ENCODE measurements at regions of chr3 and their contacts with region 1.

Region 1: GRCh38 chr3:155895379-155895900 is 25.0 kb downstream of the GMPS start:
- DNase-seq: no peak
- H3K4me3 Mint-ChIP-seq: no peak overlapping the region
- H3K27ac Mint-ChIP-seq: no peak overlapping the region
- H3K4me1 Mint-ChIP-seq: peaks cover 5% of the 10 kb centered on the region
- H3K27me3 Mint-ChIP-seq: no peaks in the 10 kb centered on the region
- CTCF ChIP-seq: no peak

Region 2: GRCh38 chr3:155859859-155860258 is 35.6 kb before region 1 on chr3:
- CTCF ChIA-PET with region 1: no interaction called
- POLR2A ChIA-PET with region 1: no interaction called
- intact Hi-C with region 1: no loop called
- DNase-seq: peak; percentile 28
- H3K4me3 Mint-ChIP-seq: no peak overlapping the region
- H3K27ac Mint-ChIP-seq: no peak overlapping the region
- H3K4me1 Mint-ChIP-seq: no peaks in the 10 kb centered on the region
- H3K27me3 Mint-ChIP-seq: no peaks in the 10 kb centered on the region
- CTCF ChIP-seq: no peak

Region 3: GRCh38 chr3:155908086-155908485 is 12.6 kb after region 1 on chr3:
- CTCF ChIA-PET with region 1: interaction called, 5 read pairs
- POLR2A ChIA-PET with region 1: interaction called, 10 read pairs
- intact Hi-C with region 1: no loop called
- DNase-seq: no peak
- H3K4me3 Mint-ChIP-seq: no peak overlapping the region
- H3K27ac Mint-ChIP-seq: peak overlapping the region; percentile 1
- H3K4me1 Mint-ChIP-seq: no peaks in the 10 kb centered on the region
- H3K27me3 Mint-ChIP-seq: no peaks in the 10 kb centered on the region
- CTCF ChIP-seq: no peak